Activated CD8-positive, alpha-beta T cell treated with anti-CD3 and anti-CD28 coated beads for 36 hours (primary cell): ENCODE measurements at regions of chr2 and their contacts with region 1.

Region 1: GRCh38 chr2:118003396-118003824 is 10.5 kb downstream of the CCDC93 start:
- DNase-seq: peak; percentile 67
- ATAC-seq: peak; percentile 96
- H3K4me3 Mint-ChIP-seq: no peak overlapping the region
- H3K27ac Mint-ChIP-seq: no peak overlapping the region
- H3K4me1 Mint-ChIP-seq: peaks cover 11% of the 10 kb centered on the region
- H3K27me3 Mint-ChIP-seq: no peaks in the 10 kb centered on the region
- CTCF ChIP-seq: peak; percentile 86

Region 2: DNA sequence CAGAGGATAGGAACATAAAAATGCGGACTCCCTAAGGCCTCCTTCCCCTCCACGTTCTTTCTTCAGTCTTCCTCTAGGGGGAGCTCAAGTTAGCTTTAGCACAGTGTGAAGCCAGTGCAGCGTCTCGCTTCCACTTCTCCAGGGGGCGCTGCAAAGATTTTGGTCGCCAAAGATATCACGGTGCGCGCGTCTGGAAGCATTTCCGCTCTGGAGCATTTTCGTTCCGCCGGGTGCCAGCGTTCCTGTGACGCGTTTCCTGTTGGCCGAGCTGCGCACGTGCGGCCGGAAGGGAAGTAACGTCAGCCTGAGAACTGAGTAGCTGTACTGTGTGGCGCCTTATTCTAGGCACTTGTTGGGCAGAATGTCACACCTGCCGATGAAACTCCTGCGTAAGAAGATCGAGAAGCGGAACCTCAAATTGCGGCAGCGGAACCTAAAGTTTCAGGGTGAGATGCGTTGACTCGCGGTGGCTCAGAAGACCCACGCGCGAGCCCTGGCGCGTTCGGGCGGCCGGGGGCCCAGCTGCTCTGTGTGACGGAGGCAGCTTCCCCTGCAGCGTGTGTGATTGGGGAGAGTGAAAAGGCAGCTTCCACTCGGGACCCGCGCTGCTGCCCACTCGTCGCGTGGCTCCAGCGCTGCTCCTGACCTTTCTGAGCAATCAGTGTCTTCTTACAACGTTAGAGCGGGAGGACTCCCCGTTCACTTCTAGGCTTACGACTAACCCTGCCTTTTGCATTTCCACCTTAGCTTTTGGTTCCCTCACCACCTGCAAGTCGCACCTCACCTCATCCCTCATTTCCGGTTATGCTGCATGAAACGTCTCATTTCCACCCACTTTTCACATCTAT is 188.8 kb before region 1 on chr2 and contains the start of gene DDX18:
- CTCF ChIA-PET with region 1: interaction called, 45 read pairs
- POLR2A ChIA-PET with region 1: no interaction called
- intact Hi-C with region 1: loop called (anchors 5 kb)
- DNase-seq: peak; percentile 98
- ATAC-seq: peak; percentile 94
- H3K4me3 Mint-ChIP-seq: peak within 1 kb of the TSS; percentile 96
- H3K27ac Mint-ChIP-seq: peak within 1 kb of the TSS; percentile 96
- H3K4me1 Mint-ChIP-seq: peaks cover 38% of the 10 kb centered on the region
- H3K27me3 Mint-ChIP-seq: no peaks in the 10 kb centered on the region
- CTCF ChIP-seq: peak; percentile 98
- total RNA-seq, gene DDX18: 139 to 156 TPM

Region 3: DNA sequence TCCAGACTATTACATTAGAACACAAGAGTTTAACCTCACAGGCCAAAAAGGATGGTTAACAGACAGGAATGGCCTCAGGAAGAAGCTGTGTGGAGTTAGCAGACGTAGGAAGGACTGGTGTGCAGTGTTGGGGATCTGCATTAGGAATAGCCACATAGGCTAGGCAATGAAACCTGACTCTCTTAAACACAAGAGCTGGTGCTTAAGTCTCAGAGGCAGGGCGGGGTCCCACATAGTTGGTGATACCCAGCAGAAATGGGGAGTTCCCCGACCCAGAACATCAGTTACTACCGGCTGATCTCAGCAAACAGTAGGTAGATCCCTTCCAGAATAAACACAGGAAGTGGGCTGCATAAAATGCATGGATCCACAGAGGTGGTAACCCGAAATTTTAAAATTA is 53.6 kb before region 1 on chr2:
- CTCF ChIA-PET with region 1: interaction called, 19 read pairs
- POLR2A ChIA-PET with region 1: no interaction called
- intact Hi-C with region 1: no loop called
- DNase-seq: no peak
- ATAC-seq: no peak
- H3K4me3 Mint-ChIP-seq: no peak overlapping the region
- H3K27ac Mint-ChIP-seq: no peak overlapping the region
- H3K4me1 Mint-ChIP-seq: no peaks in the 10 kb centered on the region
- H3K27me3 Mint-ChIP-seq: no peaks in the 10 kb centered on the region
- CTCF ChIP-seq: no peak

Region 4: DNA sequence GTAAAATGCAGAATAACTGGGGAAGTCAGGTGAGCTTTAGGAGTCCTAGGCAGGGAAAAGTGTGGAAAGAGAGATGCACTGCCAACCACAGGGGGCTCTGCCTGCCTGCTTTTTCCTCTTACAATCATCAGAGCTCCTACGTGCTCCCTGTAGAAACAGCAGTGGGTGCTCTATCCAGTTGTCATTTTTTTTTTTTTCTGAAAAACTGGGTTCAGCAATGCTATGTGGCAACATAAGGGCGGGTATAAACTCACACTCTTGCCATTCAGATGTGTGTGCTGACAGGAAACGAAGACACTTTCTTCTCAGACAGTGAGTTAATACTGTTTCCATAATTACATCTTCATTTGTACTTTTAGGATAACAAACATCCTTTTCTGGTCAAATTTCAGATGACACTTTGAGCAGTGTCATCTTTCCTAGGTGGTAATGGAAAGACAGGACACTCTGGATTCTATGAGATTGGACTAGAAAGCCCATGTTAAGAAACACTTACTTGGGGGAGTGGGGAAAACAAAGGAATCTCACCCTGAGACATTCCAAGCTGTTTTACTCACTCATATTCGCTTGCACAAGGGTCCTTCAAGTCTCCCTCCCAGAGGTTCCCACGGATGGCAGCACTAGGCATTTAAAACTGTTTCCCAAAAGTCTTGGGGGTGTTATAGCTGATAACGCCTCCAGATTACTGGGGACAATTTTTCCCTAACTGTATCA is 30.8 kb before region 1 on chr2:
- CTCF ChIA-PET with region 1: interaction called, 18 read pairs
- POLR2A ChIA-PET with region 1: interaction called, 4 read pairs
- intact Hi-C with region 1: no loop called
- DNase-seq: no peak
- ATAC-seq: no peak
- H3K4me3 Mint-ChIP-seq: no peak overlapping the region
- H3K27ac Mint-ChIP-seq: no peak overlapping the region
- H3K4me1 Mint-ChIP-seq: no peaks in the 10 kb centered on the region
- H3K27me3 Mint-ChIP-seq: no peaks in the 10 kb centered on the region
- CTCF ChIP-seq: no peak

Region 5: DNA sequence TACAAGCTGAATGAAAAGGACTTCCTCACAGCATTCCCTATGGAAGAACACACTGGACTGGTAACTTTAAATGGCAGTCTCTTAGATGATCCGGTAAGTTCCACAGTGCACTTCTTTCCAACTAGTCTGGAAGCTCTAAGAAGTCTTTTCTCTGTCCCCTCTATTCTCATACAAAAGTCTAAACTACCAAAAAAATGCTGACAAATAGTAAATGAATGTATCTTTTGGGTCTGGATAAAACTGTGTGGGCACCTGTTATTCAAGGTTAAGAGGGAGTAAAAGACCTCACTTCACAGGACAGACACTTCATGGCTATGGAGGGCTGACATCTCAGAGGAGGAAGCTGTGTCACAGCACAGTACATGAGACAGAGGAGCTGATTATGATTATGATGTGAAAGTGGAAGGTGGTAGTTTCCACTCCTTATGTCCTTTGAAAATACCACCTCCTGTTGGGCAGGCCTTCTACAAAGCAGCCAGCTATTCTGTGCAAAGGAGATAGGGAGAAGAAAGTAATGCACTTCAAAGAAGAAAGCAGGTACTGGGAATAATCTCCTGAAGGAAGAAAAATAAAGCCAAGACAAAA is 13.5 kb before region 1 on chr2:
- CTCF ChIA-PET with region 1: interaction called, 66 read pairs
- POLR2A ChIA-PET with region 1: interaction called, 4 read pairs
- intact Hi-C with region 1: no loop called
- DNase-seq: no peak
- ATAC-seq: no peak
- H3K4me3 Mint-ChIP-seq: no peak overlapping the region
- H3K27ac Mint-ChIP-seq: no peak overlapping the region
- H3K4me1 Mint-ChIP-seq: peaks cover 4% of the 10 kb centered on the region
- H3K27me3 Mint-ChIP-seq: no peaks in the 10 kb centered on the region
- CTCF ChIP-seq: no peak

Region 6: GRCh38 chr2:118019821-118020220 is 16.4 kb after region 1 on chr2:
- CTCF ChIA-PET with region 1: interaction called, 33 read pairs
- POLR2A ChIA-PET with region 1: no interaction called
- intact Hi-C with region 1: no loop called
- DNase-seq: no peak
- ATAC-seq: no peak
- H3K4me3 Mint-ChIP-seq: no peak overlapping the region
- H3K27ac Mint-ChIP-seq: no peak overlapping the region
- H3K4me1 Mint-ChIP-seq: peaks cover 10% of the 10 kb centered on the region
- H3K27me3 Mint-ChIP-seq: peaks cover 2% of the 10 kb centered on the region
- CTCF ChIP-seq: no peak

Region 7: DNA sequence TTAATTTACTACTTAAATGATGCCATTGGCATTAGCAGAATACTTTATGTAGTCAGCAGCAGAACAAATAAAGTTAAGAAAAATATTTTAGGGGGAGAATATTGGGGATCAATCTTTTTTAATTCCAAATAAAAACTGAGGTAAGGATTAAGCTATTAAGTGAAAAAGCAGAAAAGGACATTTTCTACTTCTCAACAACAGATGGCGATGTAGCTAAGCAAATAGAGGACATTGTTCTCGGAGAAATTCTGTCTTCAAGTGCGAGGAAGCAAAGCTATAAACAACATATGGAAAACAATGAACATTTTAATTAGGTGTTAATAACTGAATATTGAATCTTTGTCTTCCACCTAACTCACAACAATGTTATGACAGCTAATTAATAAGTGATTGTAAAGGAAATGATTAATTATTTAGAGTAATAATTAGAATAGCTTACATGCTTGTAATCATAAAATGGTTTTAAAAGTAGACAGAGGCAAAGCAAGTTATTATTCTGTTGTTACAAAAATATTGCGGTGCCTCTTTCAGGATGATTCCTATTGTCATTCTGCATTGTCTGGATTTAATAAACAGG is 43.3 kb after region 1 on chr2:
- CTCF ChIA-PET with region 1: interaction called, 14 read pairs
- POLR2A ChIA-PET with region 1: no interaction called
- intact Hi-C with region 1: no loop called
- DNase-seq: no peak
- ATAC-seq: no peak
- H3K4me3 Mint-ChIP-seq: no peak overlapping the region
- H3K27ac Mint-ChIP-seq: no peak overlapping the region
- H3K4me1 Mint-ChIP-seq: peaks cover 2% of the 10 kb centered on the region
- H3K27me3 Mint-ChIP-seq: peaks cover 36% of the 10 kb centered on the region
- CTCF ChIP-seq: peak; percentile 74

Region 8: GRCh38 chr2:118473846-118474540 is 470.6 kb after region 1 on chr2:
- CTCF ChIA-PET with region 1: no interaction called
- POLR2A ChIA-PET with region 1: no interaction called
- intact Hi-C with region 1: no loop called
- DNase-seq: no peak
- ATAC-seq: no peak
- H3K4me3 Mint-ChIP-seq: no peak overlapping the region
- H3K27ac Mint-ChIP-seq: no peak overlapping the region
- H3K4me1 Mint-ChIP-seq: no peaks in the 10 kb centered on the region
- H3K27me3 Mint-ChIP-seq: peaks cover 4% of the 10 kb centered on the region
- CTCF ChIP-seq: no peak